ENCODE measurements at regions of chr13 and their contacts with region 1.

Region 1: GRCh38 chr13:32586080-32586900 is at the start of gene PDS5B:
- DNase-seq: peak; percentile 92
- H3K4me3 Mint-ChIP-seq: peak within 1 kb of the TSS; percentile 97
- H3K27ac Mint-ChIP-seq: peak within 1 kb of the TSS; percentile 95
- H3K4me1 Mint-ChIP-seq: peaks cover 40% of the 10 kb centered on the region
- H3K27me3 Mint-ChIP-seq: peaks cover 5% of the 10 kb centered on the region
- total RNA-seq, gene PDS5B: 58.5 and 63.1 TPM in 2 replicates

Region 2: DNA sequence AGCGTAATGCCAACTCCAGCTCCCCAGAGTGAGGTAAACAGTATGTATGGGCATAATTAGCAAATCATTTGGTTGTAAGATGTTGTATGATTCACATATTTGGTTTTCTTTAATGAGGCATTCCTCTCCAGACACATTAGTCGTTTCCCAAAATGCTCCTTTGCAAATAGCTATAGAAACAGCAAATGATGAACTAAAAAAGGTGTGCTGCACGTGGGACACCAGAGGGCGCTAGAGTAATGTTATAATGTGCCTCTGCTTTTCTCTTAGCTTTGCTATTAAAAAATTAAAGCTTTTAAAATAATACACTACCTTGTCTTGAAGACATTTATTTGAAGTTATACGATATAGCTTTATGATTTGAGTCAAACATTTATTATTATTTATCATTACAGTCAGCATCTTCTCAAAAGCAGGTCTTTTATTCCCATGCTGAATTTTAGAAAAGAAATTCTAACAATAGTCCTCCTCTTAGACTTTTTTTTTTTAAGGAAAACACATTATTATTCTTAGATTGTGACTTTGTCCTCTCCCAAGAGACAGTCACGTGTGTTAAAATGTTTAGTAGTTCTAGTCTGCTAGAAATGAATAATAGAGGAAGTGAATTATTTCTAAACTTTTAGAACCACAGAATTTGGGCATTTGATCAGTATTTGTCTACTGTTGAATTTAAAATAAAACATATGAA is 676.3 kb before region 1 on chr13:
- intact Hi-C with region 1: loop called (anchors 10 kb)
- DNase-seq: peak; percentile 38
- H3K4me3 Mint-ChIP-seq: no peak overlapping the region
- H3K27ac Mint-ChIP-seq: no peak overlapping the region
- H3K4me1 Mint-ChIP-seq: peaks cover 22% of the 10 kb centered on the region
- H3K27me3 Mint-ChIP-seq: peaks cover 23% of the 10 kb centered on the region

Region 3: GRCh38 chr13:32538621-32539246 is 47.6 kb before region 1 on chr13 and contains the start of gene N4BP2L2:
- intact Hi-C with region 1: loop called (anchors 1 kb)
- DNase-seq: peak; percentile 88
- H3K4me3 Mint-ChIP-seq: peak within 1 kb of the TSS; percentile 93
- H3K27ac Mint-ChIP-seq: peak within 1 kb of the TSS; percentile 98
- H3K4me1 Mint-ChIP-seq: peaks cover 36% of the 10 kb centered on the region
- H3K27me3 Mint-ChIP-seq: no peaks in the 10 kb centered on the region
- total RNA-seq, gene N4BP2L2: 94.3 and 105 TPM in 2 replicates

Region 4: GRCh38 chr13:32650705-32651311 is 64.5 kb after region 1 on chr13:
- intact Hi-C with region 1: loop called (anchors 1 kb)
- DNase-seq: peak; percentile 41
- H3K4me3 Mint-ChIP-seq: no peak overlapping the region
- H3K27ac Mint-ChIP-seq: peak overlapping the region; percentile 70
- H3K4me1 Mint-ChIP-seq: peaks cover 35% of the 10 kb centered on the region
- H3K27me3 Mint-ChIP-seq: no peaks in the 10 kb centered on the region

Region 5: GRCh38 chr13:32791545-32792172 is 205.4 kb after region 1 on chr13:
- intact Hi-C with region 1: loop called (anchors 5 kb)
- DNase-seq: peak; percentile 36
- H3K4me3 Mint-ChIP-seq: no peak overlapping the region
- H3K27ac Mint-ChIP-seq: peak overlapping the region; percentile 7
- H3K4me1 Mint-ChIP-seq: peaks cover 32% of the 10 kb centered on the region
- H3K27me3 Mint-ChIP-seq: no peaks in the 10 kb centered on the region

Region 6: DNA sequence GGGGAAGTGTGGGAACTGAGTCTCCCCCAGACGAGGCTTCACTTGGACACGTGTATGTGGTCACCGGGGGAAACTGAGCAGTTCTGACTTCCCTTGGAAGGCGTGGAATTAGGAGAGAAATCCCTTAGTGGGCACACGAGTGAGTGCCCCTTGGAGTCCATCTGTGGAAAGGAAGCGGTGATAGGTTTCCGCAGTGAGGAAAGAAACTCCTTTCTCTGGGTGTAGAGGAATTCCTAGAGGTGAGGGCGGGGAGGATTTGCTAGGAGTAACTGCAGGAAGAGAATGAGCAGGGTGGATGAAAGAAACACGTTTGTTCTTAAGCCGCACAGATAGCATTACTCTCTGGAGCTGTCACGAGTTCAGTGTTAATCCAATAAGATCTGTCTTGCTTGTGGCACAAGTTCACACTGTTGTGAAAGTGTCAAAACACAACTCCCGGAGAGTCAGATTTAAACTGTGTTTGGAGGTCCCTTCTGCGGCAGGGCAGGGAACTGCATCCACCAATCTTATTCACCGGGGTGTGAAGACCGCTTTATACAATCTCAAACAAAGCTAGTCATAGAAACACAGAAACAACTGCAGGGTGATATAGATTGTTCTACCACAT is 431.1 kb after region 1 on chr13:
- intact Hi-C with region 1: loop called (anchors 2 kb)
- DNase-seq: peak; percentile 28
- H3K4me3 Mint-ChIP-seq: peak overlapping the region; percentile 62
- H3K27ac Mint-ChIP-seq: peak overlapping the region; percentile 36
- H3K4me1 Mint-ChIP-seq: peaks cover 20% of the 10 kb centered on the region
- H3K27me3 Mint-ChIP-seq: peaks cover 62% of the 10 kb centered on the region

Region 7: GRCh38 chr13:33723772-33724435 is 1137.6 kb after region 1 on chr13:
- intact Hi-C with region 1: loop called (anchors 5 kb)
- DNase-seq: peak; percentile 56
- H3K4me3 Mint-ChIP-seq: no peak overlapping the region
- H3K27ac Mint-ChIP-seq: peak overlapping the region; percentile 80
- H3K4me1 Mint-ChIP-seq: peaks cover 34% of the 10 kb centered on the region
- H3K27me3 Mint-ChIP-seq: no peaks in the 10 kb centered on the region

Measured in activated T-helper 2 cell treated with anti-CD3 and anti-CD28 coated beads, Interferon-gamma antibody, Interleukin-2, Interleukin-4, amounts not matched to agents 10 μg/mL and 5 μg/mL and 100 μg/mL, durations not matched to agents 14 hours and 24 hours and 36 hours (primary cell).